A673 (cell line): ENCODE measurements at regions of chr11 and their contacts with region 1.

Region 1: DNA sequence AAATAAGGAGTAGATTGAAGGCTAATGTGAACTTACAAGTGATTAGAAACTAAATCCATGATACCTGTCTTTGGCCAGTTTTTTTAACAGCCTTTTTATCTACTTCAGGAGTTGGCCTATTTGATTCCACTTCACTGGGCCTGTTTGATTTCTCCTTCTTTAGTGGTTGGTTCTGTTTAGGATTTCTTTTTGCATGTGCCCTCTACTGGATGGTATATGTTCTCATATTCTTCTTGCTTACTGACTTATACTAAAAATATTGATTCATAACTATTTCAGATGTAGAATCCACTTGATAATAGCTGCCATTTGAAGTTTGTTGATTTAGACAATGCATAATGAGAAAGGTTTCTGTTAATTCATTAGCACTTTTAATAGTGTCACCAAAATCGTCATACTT is 53.9 kb downstream of the USP47 start:
- DNase-seq: peak; percentile 17
- H3K4me3 ChIP-seq: no peak overlapping the region
- H3K27ac ChIP-seq: no peak overlapping the region
- H3K4me1 ChIP-seq: peaks cover 12% of the 10 kb centered on the region
- H3K27me3 ChIP-seq: no peaks in the 10 kb centered on the region
- CTCF ChIP-seq: peak; percentile 33; the same call in 1 of the 2 replicates

Region 2: GRCh38 chr11:11931461-11932055 is 35.9 kb after region 1 on chr11:
- CTCF ChIA-PET with region 1: interaction called, 10 read pairs
- POLR2A ChIA-PET with region 1: no interaction called
- intact Hi-C with region 1: no loop called
- DNase-seq: peak; percentile 68
- H3K4me3 ChIP-seq: no peak overlapping the region
- H3K27ac ChIP-seq: no peak overlapping the region
- H3K4me1 ChIP-seq: no peaks in the 10 kb centered on the region
- H3K27me3 ChIP-seq: no peaks in the 10 kb centered on the region
- CTCF ChIP-seq: peak; percentile 71

Region 3: GRCh38 chr11:13183094-13183825 is 1287.6 kb after region 1 on chr11:
- CTCF ChIA-PET with region 1: no interaction called
- POLR2A ChIA-PET with region 1: no interaction called
- intact Hi-C with region 1: no loop called
- DNase-seq: peak; percentile 44
- H3K4me3 ChIP-seq: peak overlapping the region; percentile 24
- H3K27ac ChIP-seq: no peak overlapping the region
- H3K4me1 ChIP-seq: no peaks in the 10 kb centered on the region
- H3K27me3 ChIP-seq: no peaks in the 10 kb centered on the region
- CTCF ChIP-seq: peak; percentile 53